ENCODE measurements at regions of chr7 and their contacts with region 1.

Region 1: DNA sequence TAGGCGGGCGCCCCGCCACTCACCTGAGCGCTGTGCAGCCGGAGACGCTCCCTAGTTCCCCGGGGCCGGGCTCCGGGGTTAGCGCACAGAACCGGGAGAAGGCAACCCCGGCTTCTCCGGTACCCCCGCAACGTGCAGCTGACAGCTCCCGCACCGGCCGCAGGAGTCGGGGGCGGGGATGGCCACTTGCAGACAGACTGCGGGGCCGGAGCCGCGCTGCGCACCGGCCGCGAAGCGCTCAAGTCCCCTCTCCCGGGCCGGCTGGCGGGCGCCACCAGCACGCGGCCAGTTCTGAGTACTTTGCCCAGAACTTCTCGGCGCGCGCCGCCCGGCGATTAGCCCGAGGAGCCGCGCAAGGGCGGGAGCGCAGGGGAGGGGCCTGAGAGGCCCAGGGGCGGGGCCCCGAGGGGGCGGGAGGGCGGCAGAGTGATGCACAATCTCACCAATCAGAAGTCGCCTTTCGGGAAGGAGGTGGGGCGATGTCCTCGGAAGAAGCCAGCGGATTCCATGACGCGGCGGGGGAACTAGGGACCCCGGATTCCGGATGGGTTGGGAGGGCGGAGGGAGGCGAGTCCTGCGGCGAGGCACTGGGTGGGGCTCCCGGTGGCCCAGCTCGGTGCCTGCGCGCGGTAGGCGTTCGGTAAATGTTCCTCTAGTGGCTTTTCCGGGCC is at the start of gene OSBPL3:
- DNase-seq: peak; percentile 98
- H3K4me3 Mint-ChIP-seq: peak within 1 kb of the TSS; percentile 96
- H3K27ac Mint-ChIP-seq: peak within 1 kb of the TSS; percentile 96
- H3K4me1 Mint-ChIP-seq: peaks cover 53% of the 10 kb centered on the region
- H3K27me3 Mint-ChIP-seq: no peaks in the 10 kb centered on the region
- total RNA-seq, gene OSBPL3: 93.7 and 93.8 TPM in 2 replicates

Region 2: GRCh38 chr7:24869572-24869971 is 110.4 kb before region 1 on chr7:
- intact Hi-C with region 1: loop called (anchors 1 kb)
- DNase-seq: no peak
- H3K4me3 Mint-ChIP-seq: no peak overlapping the region
- H3K27ac Mint-ChIP-seq: peak overlapping the region; percentile 2
- H3K4me1 Mint-ChIP-seq: peaks cover 43% of the 10 kb centered on the region
- H3K27me3 Mint-ChIP-seq: no peaks in the 10 kb centered on the region

Region 3: GRCh38 chr7:24907311-24907886 is 72.6 kb before region 1 on chr7:
- intact Hi-C with region 1: loop called (anchors 1 kb)
- DNase-seq: peak; percentile 84
- H3K4me3 Mint-ChIP-seq: no peak overlapping the region
- H3K27ac Mint-ChIP-seq: no peak overlapping the region
- H3K4me1 Mint-ChIP-seq: peaks cover 33% of the 10 kb centered on the region
- H3K27me3 Mint-ChIP-seq: no peaks in the 10 kb centered on the region

Region 4: DNA sequence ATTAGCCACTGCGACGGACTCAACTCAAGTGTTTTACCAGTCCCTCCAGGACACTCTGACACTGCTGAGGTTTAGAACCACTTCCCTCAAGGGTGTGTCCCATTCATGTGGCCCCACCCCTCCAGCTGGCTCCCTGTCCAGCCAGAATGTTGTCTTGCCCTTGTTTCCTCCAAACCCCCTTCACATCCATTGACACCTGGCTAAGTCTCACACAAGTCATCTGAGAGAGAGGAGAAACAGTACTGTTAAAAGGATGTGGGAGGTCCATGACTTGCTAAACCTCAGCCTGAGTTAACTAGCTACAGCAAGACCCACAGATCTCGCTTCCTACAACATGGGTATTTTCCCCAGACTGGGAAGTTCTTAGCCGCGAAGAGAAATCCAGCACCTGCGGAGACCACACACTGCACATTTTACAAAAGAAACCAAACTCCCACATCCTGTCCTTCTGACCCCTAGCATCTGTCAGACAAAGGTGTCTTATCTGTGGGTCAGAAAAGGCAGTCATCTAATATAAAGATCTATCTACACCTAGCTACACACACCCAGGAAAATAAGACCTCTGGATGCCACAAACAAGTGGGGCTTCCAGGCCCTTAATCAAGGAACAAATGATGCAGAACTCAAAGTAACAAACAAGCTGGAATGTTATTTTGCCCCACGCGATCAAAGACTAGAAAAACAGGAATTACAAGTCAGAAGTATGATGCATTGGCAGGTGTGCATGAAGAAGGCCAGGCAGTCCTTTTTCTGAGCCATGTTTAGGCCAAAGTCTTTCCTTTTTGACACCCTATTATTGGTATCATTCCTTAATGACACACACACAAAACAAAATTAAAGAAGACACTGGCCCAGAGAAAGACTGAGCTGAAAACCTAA is 13.9 kb before region 1 on chr7:
- intact Hi-C with region 1: loop called (anchors 1 kb)
- DNase-seq: peak; percentile 88
- H3K4me3 Mint-ChIP-seq: peak overlapping the region; percentile 75
- H3K27ac Mint-ChIP-seq: peak overlapping the region; percentile 84
- H3K4me1 Mint-ChIP-seq: peaks cover 76% of the 10 kb centered on the region
- H3K27me3 Mint-ChIP-seq: no peaks in the 10 kb centered on the region

Region 5: GRCh38 chr7:25069900-25070443 is 90.0 kb after region 1 on chr7:
- intact Hi-C with region 1: loop called (anchors 1 kb)
- DNase-seq: peak; percentile 85
- H3K4me3 Mint-ChIP-seq: no peak overlapping the region
- H3K27ac Mint-ChIP-seq: no peak overlapping the region
- H3K4me1 Mint-ChIP-seq: peaks cover 19% of the 10 kb centered on the region
- H3K27me3 Mint-ChIP-seq: no peaks in the 10 kb centered on the region

Region 6: DNA sequence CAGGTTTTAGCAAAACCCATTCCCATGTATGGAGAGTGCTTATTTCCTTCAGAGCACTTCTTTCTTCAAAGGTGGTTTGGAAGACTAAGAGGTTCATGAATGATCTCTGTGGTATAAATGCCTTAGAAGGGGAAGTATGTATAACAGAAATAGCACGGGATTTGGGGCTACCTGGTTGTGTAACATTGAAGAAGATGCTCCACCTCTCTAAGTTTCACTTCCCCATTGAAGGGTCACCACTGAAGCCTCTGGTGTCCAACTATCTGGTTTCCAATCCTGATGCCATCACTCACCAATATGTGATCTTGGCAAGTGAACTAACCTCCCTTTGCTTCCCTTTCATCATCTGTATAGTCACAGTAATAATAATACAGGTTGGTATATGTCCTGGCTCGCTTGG is 107.9 kb after region 1 on chr7:
- intact Hi-C with region 1: no loop called
- DNase-seq: no peak
- H3K4me3 Mint-ChIP-seq: no peak overlapping the region
- H3K27ac Mint-ChIP-seq: no peak overlapping the region
- H3K4me1 Mint-ChIP-seq: no peaks in the 10 kb centered on the region
- H3K27me3 Mint-ChIP-seq: peaks cover 16% of the 10 kb centered on the region

Measured in activated CD4-positive, alpha-beta T cell treated with anti-CD3 and anti-CD28 coated beads, Interleukin-2, amount 10 ng/mL, durations not matched to agents 24 days and 14 days (primary cell).